ENCODE measurements at regions of chr19 and their contacts with region 1.

Region 1: GRCh38 chr19:55503502-55504251 is 15.4 kb downstream of the SSC5D start:
- DNase-seq: peak; percentile 99
- H3K4me3 ChIP-seq: peak overlapping the region; percentile 49 to 62
- H3K27ac ChIP-seq: peak overlapping the region in 1 of 2 experiments; percentile 71; a peak in 1 of 4 replicates
- H3K4me1 ChIP-seq: peaks cover 0 to 6% of the 10 kb centered on the region in 2 experiments; a peak in 1 of 4 replicates
- H3K27me3 ChIP-seq: no peaks in the 10 kb centered on the region
- CTCF ChIP-seq: peak; percentile 96
- EP300 ChIP-seq: no peak
- RAD21 ChIP-seq: peak; percentile 93

Region 2: GRCh38 chr19:55452749-55453346 is 50.8 kb before region 1 on chr19:
- CTCF ChIA-PET with region 1: interaction called, 11 read pairs
- POLR2A ChIA-PET with region 1: no interaction called
- DNase-seq: peak; percentile 98
- H3K4me3 ChIP-seq: peak overlapping the region in 1 of 2 experiments; percentile 36; a peak in 2 of 4 replicates
- H3K27ac ChIP-seq: no peak overlapping the region
- H3K4me1 ChIP-seq: peaks cover 0 to 13% of the 10 kb centered on the region in 2 experiments; a peak in 2 of 4 replicates
- H3K27me3 ChIP-seq: peaks cover 11% of the 10 kb centered on the region
- CTCF ChIP-seq: no peak; the same call in 1 of the 2 replicates
- EP300 ChIP-seq: no peak
- RAD21 ChIP-seq: no peak

Region 3: DNA sequence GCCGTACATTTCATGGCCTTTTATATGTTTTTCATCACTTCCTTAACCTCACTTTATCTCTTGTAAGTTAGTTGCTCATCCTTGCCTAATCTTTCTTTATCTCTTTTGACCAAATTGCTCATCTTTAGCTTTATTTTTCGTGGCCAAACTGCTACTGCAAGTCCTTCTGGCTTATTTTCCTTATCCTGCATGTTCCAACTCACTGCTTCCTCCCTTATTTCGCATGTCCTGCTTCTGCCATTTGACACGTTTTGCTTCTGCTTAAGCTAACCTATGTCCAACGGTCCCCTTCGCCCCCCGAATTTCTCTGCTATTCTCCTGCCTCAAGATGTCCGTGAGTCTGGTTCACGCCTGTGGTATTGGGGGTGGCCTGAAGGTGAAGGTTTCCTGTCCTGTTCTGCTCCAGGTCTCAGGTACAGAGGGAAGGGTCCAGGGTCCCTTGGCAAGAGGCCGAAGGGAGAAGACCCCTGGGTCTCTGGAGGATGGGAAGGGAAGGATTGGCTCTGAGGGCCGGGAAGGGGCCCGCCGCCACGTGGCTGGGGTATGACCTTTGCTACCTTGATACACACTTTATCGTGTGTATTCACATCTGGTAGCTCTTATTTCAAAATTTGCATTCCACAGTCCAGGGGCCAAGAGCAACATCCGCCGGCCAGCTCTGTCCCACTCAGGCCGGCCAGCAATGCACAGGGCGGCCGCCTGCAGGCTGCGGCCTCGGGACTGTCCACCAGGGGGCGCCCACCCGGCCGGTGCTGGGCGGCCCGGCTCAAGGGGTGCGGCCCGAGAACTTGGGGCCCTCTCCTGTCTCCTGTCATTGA is 36.2 kb before region 1 on chr19:
- CTCF ChIA-PET with region 1: interaction called, 81 read pairs
- POLR2A ChIA-PET with region 1: interaction called, 4 read pairs
- DNase-seq: peak; percentile 90
- H3K4me3 ChIP-seq: peak overlapping the region in 1 of 2 experiments; percentile 33; a peak in 1 of 4 replicates
- H3K27ac ChIP-seq: no peak overlapping the region
- H3K4me1 ChIP-seq: peaks cover 0 to 3% of the 10 kb centered on the region in 2 experiments; a peak in 2 of 4 replicates
- H3K27me3 ChIP-seq: no peaks in the 10 kb centered on the region
- CTCF ChIP-seq: peak; percentile 96
- EP300 ChIP-seq: no peak
- RAD21 ChIP-seq: peak; percentile 63

Region 4: DNA sequence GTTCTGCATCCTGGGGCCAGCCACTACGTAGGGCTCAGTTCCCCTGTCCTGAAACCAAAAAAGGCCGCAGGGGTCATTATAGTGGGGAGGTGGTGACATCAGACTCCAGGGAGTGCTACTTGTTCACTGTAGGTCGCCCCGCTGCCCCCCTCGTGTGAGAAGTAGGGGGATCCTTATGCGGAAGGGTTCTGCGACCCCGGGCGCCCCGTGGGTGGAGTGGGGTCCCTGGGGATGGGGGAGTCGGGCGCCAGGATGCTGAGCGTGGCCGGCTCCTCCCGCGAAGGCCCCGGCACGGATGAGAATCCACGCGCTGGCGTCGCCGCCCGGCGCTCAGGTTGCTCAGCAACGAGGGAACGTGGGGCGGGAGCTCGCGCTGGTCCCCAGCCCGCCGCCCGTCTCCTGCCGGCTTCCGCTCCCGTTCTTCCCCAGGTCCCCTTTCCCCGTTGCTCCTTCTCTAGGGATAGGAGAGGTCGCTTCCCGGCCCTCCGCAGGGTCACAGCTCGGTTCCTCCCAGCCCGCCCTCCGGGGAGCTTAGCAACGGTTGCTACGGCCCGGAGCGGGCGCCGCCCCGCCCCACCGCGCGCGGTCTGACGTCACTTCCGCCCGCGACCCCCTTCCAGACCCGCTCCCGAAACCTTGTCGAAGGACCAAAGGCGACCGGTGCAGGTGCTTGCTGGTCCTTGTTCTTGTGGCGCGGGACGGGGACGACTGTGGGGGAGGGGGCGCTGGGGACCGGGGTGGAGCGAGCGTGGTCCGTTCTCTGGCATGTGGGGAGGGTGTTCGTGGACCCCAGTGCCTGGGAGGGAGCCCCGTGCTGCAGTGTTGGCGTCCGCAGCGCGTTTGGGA is 18.9 kb before region 1 on chr19 and contains the start of gene NAT14:
- CTCF ChIA-PET with region 1: interaction called, 162 read pairs
- POLR2A ChIA-PET with region 1: interaction called, 10 read pairs
- DNase-seq: peak; percentile 97
- H3K4me3 ChIP-seq: peak within 1 kb of the TSS; percentile 69 to 80
- H3K27ac ChIP-seq: peak within 1 kb of the TSS; percentile 95 to 97
- H3K4me1 ChIP-seq: peaks cover 30 to 44% of the 10 kb centered on the region in 2 experiments; a peak in 3 of 4 replicates
- H3K27me3 ChIP-seq: no peaks in the 10 kb centered on the region
- CTCF ChIP-seq: no peak
- EP300 ChIP-seq: no peak
- RAD21 ChIP-seq: no peak
- polyA plus RNA-seq, gene NAT14: 84.4 and 89.9 TPM in 2 replicates

Region 5: GRCh38 chr19:55552620-55553019 is 48.9 kb after region 1 on chr19:
- CTCF ChIA-PET with region 1: no interaction called
- POLR2A ChIA-PET with region 1: no interaction called
- DNase-seq: no peak
- H3K4me3 ChIP-seq: no peak overlapping the region
- H3K27ac ChIP-seq: no peak overlapping the region
- H3K4me1 ChIP-seq: peaks cover 0 to 17% of the 10 kb centered on the region in 2 experiments; a peak in 3 of 4 replicates
- H3K27me3 ChIP-seq: no peaks in the 10 kb centered on the region
- CTCF ChIP-seq: no peak
- EP300 ChIP-seq: no peak
- RAD21 ChIP-seq: no peak

Region 6: GRCh38 chr19:55632463-55632834 is 128.8 kb after region 1 on chr19:
- CTCF ChIA-PET with region 1: interaction called, 21 read pairs
- POLR2A ChIA-PET with region 1: no interaction called
- DNase-seq: peak; percentile 62
- H3K4me3 ChIP-seq: peak overlapping the region in 1 of 2 experiments; percentile 30; a peak in 1 of 4 replicates
- H3K27ac ChIP-seq: peak overlapping the region in 1 of 2 experiments; percentile 26; a peak in 1 of 4 replicates
- H3K4me1 ChIP-seq: peaks cover 0 to 14% of the 10 kb centered on the region in 2 experiments; a peak in 1 of 4 replicates
- H3K27me3 ChIP-seq: no peaks in the 10 kb centered on the region
- CTCF ChIP-seq: peak; percentile 83
- EP300 ChIP-seq: no peak
- RAD21 ChIP-seq: peak; percentile 82

Measured in SK-N-SH (cell line).